Natural killer cell (primary cell): ENCODE measurements at regions of chr16 and their contacts with region 1.

Region 1: GRCh38 chr16:70510216-70510615 is 13.1 kb downstream of the COG4 start:
- DNase-seq: no peak
- ATAC-seq: no peak
- H3K4me3 ChIP-seq: no peak overlapping the region
- H3K4me3 Mint-ChIP-seq: no peak overlapping the region
- H3K27ac ChIP-seq: no peak overlapping the region
- H3K27ac Mint-ChIP-seq: peak overlapping the region in 1 of 2 donors; percentile 79
- H3K4me1 ChIP-seq: no peaks in the 10 kb centered on the region
- H3K4me1 Mint-ChIP-seq: peaks cover 8% of the 10 kb centered on the region in 2 donors
- H3K27me3 ChIP-seq: no peaks in the 10 kb centered on the region
- H3K27me3 Mint-ChIP-seq: no peaks in the 10 kb centered on the region
- CTCF ChIP-seq: no peak

Region 2: GRCh38 chr16:70470927-70471341 is 39.3 kb before region 1 on chr16:
- intact Hi-C with region 1: loop called (anchors 1 kb)
- DNase-seq: no peak
- ATAC-seq: peak in 1 of 3 donors; percentile 22
- H3K4me3 ChIP-seq: no peak overlapping the region
- H3K4me3 Mint-ChIP-seq: no peak overlapping the region
- H3K27ac ChIP-seq: no peak overlapping the region
- H3K27ac Mint-ChIP-seq: no peak overlapping the region
- H3K4me1 ChIP-seq: no peaks in the 10 kb centered on the region
- H3K4me1 Mint-ChIP-seq: no peaks in the 10 kb centered on the region
- H3K27me3 ChIP-seq: no peaks in the 10 kb centered on the region
- H3K27me3 Mint-ChIP-seq: no peaks in the 10 kb centered on the region
- CTCF ChIP-seq: no peak